ENCODE measurements at regions of chr2 and their contacts with region 1.

Region 1: GRCh38 chr2:20015472-20016083 is 3.1 kb upstream of the MATN3 start:
- DNase-seq: no peak
- ATAC-seq: peak; percentile 42
- H3K4me3 Mint-ChIP-seq: no peak overlapping the region
- H3K27ac Mint-ChIP-seq: no peak overlapping the region
- H3K4me1 Mint-ChIP-seq: peaks cover 3% of the 10 kb centered on the region
- H3K27me3 Mint-ChIP-seq: peaks cover 25% of the 10 kb centered on the region

Region 2: DNA sequence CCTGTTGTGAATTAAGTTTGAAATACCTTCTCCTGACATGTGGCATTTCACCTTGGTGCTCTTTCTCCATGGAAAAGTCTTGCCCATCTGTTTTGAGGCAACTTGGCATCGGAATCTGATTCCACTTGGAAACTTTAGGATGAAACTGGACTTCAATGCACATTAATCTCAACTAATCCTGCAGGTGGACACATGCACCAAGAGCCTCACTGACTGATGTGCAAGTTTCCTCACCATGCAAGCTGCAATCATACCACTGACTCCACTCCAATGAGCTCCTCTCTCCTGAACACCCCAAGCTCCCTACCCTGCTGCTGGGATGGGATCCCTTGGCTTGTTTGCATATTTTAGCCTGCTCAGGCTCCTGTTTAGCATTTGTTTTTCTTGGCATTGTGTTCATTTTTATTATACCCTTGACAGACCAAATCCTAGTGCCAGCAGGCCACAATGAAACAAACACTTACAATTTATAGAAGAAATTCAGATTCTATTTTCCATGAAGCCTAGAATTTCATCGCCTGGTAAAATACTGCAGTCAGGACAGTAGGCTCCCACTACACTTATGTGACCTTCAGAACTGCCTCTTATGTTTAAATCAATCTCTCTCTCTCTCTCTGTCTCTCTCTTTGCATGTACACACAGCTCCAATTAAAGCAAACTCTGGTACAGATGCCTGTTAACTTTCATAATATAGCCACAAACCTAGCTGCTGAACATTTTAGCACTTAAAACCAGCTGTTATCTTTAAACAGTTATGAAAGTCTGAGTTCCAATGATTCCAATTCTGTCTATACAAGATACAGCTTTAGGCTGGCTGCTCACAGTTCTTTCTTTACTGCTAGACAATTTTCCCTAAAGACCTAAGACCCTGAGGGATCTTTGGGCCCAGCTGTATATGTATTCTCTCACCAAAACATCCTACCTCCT is 798.6 kb before region 1 on chr2:
- CTCF ChIA-PET with region 1: no interaction called
- POLR2A ChIA-PET with region 1: no interaction called
- intact Hi-C with region 1: no loop called
- DNase-seq: no peak
- ATAC-seq: no peak
- H3K4me3 Mint-ChIP-seq: no peak overlapping the region
- H3K27ac Mint-ChIP-seq: no peak overlapping the region
- H3K4me1 Mint-ChIP-seq: peaks cover 5% of the 10 kb centered on the region
- H3K27me3 Mint-ChIP-seq: peaks cover 2% of the 10 kb centered on the region

Region 3: DNA sequence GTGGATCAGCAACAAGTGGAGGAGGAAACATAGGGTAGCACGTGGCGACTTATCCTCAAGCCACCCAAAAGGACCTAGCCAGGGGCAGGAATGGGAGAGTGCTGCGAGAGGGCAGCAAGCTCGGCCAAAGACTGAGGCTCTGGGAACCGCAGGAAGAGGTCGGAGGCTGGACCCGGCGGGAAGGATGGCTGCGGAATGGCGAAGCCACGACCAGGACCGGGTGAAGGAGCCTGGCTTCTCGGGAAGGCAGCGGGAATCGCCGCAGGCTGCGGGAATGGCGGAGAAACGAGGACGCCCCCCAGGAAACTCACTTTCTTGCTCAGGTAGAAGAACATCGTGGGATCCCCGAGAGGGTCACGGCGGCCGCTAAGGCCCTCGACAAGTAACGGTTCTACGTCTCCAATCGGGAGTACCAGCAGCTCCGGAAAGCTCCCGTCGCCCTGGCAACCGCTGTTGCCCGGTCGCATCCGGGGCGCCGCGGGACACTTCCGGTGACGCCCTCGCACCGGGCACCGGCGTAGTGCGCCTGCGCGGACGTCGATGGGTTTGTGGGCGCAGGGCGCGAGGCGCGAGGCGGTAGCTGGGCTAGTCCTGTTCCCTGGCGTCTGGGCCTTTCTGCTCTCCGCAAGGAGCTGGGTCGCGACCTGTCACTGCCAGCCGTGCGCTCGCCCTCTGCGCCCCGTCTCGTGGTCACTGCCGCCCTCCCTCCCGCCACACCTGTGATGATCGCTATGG is 25.7 kb before region 1 on chr2 and contains the start of gene WDR35:
- CTCF ChIA-PET with region 1: interaction called, 14 read pairs
- POLR2A ChIA-PET with region 1: no interaction called
- intact Hi-C with region 1: no loop called
- DNase-seq: peak; percentile 95
- ATAC-seq: peak; percentile 97
- H3K4me3 Mint-ChIP-seq: peak within 1 kb of the TSS; percentile 90
- H3K27ac Mint-ChIP-seq: peak within 1 kb of the TSS; percentile 75
- H3K4me1 Mint-ChIP-seq: peaks cover 28% of the 10 kb centered on the region
- H3K27me3 Mint-ChIP-seq: peaks cover 12% of the 10 kb centered on the region
- total RNA-seq, gene WDR35: 6.2 to 7.4 TPM

Region 4: GRCh38 chr2:20001361-20001863 is 14.2 kb before region 1 on chr2:
- CTCF ChIA-PET with region 1: interaction called, 23 read pairs
- POLR2A ChIA-PET with region 1: no interaction called
- intact Hi-C with region 1: no loop called
- DNase-seq: no peak
- ATAC-seq: no peak
- H3K4me3 Mint-ChIP-seq: no peak overlapping the region
- H3K27ac Mint-ChIP-seq: no peak overlapping the region
- H3K4me1 Mint-ChIP-seq: no peaks in the 10 kb centered on the region
- H3K27me3 Mint-ChIP-seq: peaks cover 19% of the 10 kb centered on the region

Region 5: DNA sequence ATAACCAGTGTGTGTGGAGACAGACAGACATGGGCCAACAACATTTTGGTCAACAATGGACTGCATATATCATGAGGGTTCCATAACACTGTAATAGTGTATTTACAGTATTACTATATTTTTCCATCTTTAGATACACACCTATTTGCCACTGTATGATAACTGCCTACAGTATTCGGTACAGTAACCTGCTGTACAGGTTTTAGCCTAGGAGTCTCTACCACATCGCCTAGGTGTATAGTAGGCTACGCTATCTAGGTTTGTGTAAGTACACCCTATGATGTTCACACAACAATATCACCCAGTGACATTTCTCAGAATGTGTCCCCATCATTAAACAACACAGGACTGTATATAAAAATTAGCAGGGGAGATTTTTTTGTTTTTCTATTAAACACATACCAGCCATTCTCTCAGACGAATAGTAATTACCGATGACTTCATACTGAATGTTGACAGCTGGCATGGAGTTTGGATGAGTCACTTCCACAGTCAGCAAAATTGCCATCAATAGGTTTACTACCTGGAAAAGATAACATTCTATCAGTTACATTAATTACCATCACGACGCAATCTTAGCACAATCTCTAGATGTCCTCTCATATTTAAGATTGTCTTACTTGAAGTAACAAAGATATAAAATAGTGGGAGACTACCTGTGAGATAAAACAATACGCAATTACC is 25.1 kb after region 1 on chr2:
- CTCF ChIA-PET with region 1: interaction called, 31 read pairs
- POLR2A ChIA-PET with region 1: no interaction called
- intact Hi-C with region 1: no loop called
- DNase-seq: no peak
- ATAC-seq: no peak
- H3K4me3 Mint-ChIP-seq: no peak overlapping the region
- H3K27ac Mint-ChIP-seq: no peak overlapping the region
- H3K4me1 Mint-ChIP-seq: peaks cover 5% of the 10 kb centered on the region
- H3K27me3 Mint-ChIP-seq: no peaks in the 10 kb centered on the region

Region 6: GRCh38 chr2:20097879-20098714 is 82.5 kb after region 1 on chr2:
- CTCF ChIA-PET with region 1: interaction called, 25 read pairs
- POLR2A ChIA-PET with region 1: interaction called, 4 read pairs
- intact Hi-C with region 1: loop called (anchors 1 kb)
- DNase-seq: peak; percentile 88
- ATAC-seq: peak; percentile 97
- H3K4me3 Mint-ChIP-seq: no peak overlapping the region
- H3K27ac Mint-ChIP-seq: no peak overlapping the region
- H3K4me1 Mint-ChIP-seq: no peaks in the 10 kb centered on the region
- H3K27me3 Mint-ChIP-seq: peaks cover 15% of the 10 kb centered on the region

Region 7: DNA sequence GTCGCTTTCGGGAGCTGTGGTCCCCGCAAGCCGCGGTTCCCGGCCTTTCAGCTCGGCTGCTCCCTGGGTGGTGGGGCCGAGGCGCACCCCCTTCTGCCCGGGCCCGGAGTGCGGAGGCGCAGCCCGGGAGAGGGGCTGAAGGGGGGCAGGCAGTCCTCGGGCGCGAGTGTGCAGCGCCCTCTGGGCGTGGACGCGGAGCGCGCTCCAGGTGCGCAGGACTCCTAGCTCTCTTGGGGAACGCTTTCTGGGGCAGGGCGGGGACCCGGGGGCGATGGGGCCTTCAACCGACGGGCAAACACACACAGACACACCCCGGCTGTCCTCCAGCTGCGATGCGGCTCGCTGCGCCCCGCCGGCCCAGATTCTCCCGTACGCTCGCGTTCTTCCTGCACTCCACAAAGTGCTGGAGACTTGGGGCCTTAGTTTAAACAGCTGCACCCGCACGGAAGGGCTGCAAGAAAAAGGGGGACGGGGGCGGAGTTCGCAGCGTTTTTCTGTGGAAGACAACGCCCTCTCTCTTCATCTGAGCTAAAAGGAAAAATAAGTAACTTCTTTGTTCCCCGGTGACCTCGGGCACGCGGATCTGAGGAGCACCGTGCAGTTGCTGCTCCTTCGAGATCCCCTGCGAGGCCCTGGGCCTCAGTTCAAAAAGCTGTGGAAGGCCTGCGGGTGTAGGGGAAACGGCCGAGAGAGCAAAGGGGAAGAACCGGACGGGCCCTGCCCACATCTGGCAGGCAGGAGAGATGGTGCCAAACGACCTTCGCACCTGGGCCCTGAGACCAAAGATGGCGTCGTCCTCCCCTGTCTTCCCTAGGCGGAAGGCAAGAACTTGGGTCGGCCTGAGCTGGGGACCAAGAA is 209.9 kb after region 1 on chr2:
- CTCF ChIA-PET with region 1: no interaction called
- POLR2A ChIA-PET with region 1: no interaction called
- intact Hi-C with region 1: no loop called
- DNase-seq: peak; percentile 66
- ATAC-seq: peak; percentile 83
- H3K4me3 Mint-ChIP-seq: peak overlapping the region; percentile 35
- H3K27ac Mint-ChIP-seq: no peak overlapping the region
- H3K4me1 Mint-ChIP-seq: peaks cover 3% of the 10 kb centered on the region
- H3K27me3 Mint-ChIP-seq: peaks cover 48% of the 10 kb centered on the region